HepG2 (cell line): ENCODE measurements at regions of chr6 and their contacts with region 1.

Region 1: DNA sequence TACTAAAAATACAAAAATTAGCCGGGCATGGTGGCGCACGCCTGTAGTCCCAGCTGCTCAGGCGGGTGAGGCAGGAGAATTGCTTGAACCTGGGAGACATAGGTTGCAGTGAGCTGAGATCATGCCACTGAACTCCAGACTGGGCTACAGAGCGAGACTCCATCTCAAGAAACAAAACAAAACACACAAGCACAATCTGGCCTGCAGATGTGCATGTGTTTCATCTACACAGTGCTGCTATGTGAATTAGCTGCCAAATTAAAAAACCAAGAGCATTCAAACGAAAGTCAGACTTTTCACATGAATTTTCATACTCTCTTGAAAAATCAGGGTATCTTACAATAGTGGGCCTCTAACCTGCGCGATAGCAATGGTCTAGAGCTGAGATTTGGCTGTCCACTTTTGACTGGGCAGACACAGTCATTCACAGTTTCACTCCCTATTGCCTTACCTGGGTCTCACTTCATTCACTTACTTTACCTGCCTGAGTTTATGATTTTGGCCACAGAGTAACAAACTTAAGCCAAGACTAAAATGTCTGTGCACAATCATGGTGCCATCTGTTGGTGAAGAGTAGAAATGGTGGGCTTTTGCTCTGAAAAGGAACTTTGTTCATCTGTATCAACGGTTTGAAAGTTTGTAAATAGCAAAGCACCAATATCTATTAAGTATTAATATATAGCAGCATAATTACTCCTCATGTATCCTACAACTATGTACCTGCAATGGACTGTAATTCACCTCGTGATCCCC is 138.5 kb upstream of the UST start:
- DNase-seq: peak; percentile 12
- ATAC-seq: peak; percentile 69
- H3K4me3 ChIP-seq: no peak overlapping the region
- H3K27ac ChIP-seq: no peak overlapping the region
- H3K4me1 ChIP-seq: no peaks in the 10 kb centered on the region
- H3K27me3 ChIP-seq: peaks cover 0 to 5% of the 10 kb centered on the region in 2 experiments; a peak in 1 of 5 replicates
- CTCF ChIP-seq: peak; percentile 67
- EP300 ChIP-seq: no peak
- POLR2A ChIP-seq: no peak
- RAD21 ChIP-seq: peak; percentile 43; the same call in 1 of the 2 replicates

Region 2: GRCh38 chr6:148559848-148560433 is 48.4 kb before region 1 on chr6:
- CTCF ChIA-PET with region 1: interaction called, 39 read pairs
- POLR2A ChIA-PET with region 1: no interaction called
- in situ Hi-C with region 1: no loop called
- intact Hi-C with region 1: loop called (anchors 1 kb)
- DNase-seq: peak; percentile 39
- ATAC-seq: peak; percentile 91
- H3K4me3 ChIP-seq: peak overlapping the region; percentile 42 to 67 (median 45)
- H3K27ac ChIP-seq: no peak overlapping the region
- H3K4me1 ChIP-seq: peaks cover 24% of the 10 kb centered on the region
- H3K27me3 ChIP-seq: peaks cover 5 to 37% of the 10 kb centered on the region in 2 experiments; a peak in 4 of 5 replicates
- CTCF ChIP-seq: peak; percentile 93
- EP300 ChIP-seq: no peak
- POLR2A ChIP-seq: no peak
- RAD21 ChIP-seq: peak; percentile 96

Region 3: GRCh38 chr6:148578245-148578732 is 30.1 kb before region 1 on chr6:
- CTCF ChIA-PET with region 1: interaction called, 17 read pairs
- POLR2A ChIA-PET with region 1: no interaction called
- in situ Hi-C with region 1: no loop called
- intact Hi-C with region 1: loop called (anchors 1 kb)
- DNase-seq: peak; percentile 66
- ATAC-seq: peak; percentile 100
- H3K4me3 ChIP-seq: no peak overlapping the region
- H3K27ac ChIP-seq: no peak overlapping the region
- H3K4me1 ChIP-seq: no peaks in the 10 kb centered on the region
- H3K27me3 ChIP-seq: peaks cover 0 to 3% of the 10 kb centered on the region in 2 experiments; a peak in 2 of 5 replicates
- CTCF ChIP-seq: peak; percentile 93
- EP300 ChIP-seq: no peak
- POLR2A ChIP-seq: no peak
- RAD21 ChIP-seq: peak; percentile 93